K562 (cell line): ENCODE measurements at regions of chr3 and their contacts with region 1.

Region 1: GRCh38 chr3:43690400-43691119 is at the start of gene ABHD5:
- DNase-seq: peak; percentile 95 to 99 (median 96)
- ATAC-seq: peak; percentile 82
- H3K4me3 ChIP-seq: peak within 1 kb of the TSS; percentile 80
- H3K27ac ChIP-seq: peak within 1 kb of the TSS; percentile 91
- H3K4me1 ChIP-seq: peaks cover 48 to 63% of the 10 kb centered on the region in 2 experiments
- H3K27me3 ChIP-seq: no peaks in the 10 kb centered on the region
- CTCF ChIP-seq: peak; percentile 42 to 69 (median 60)
- EP300 ChIP-seq: peak; percentile 13
- POLR2A ChIP-seq: peak; percentile 98
- RAD21 ChIP-seq: peak; percentile 50 to 52
- polyA plus RNA-seq, gene ABHD5: 31.9 to 35.0 TPM

Region 2: DNA sequence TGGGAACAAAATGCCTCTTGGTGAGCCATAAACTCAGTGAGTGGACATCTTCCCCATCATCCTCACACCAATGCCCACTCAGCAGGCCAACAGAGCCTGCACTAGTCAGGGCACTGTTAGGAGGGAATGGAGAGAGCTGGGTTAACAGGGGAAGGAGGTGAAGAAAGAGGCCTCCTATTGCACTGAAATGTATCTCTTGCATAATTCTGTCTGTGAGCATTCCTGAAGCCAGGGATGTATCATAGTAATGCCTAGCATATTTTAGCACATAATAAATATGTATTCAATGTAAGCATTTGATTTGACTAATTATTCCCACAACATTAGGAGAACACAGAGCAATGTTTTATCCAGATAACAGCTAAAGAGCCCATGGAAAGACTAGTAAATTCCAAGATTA is 149.9 kb before region 1 on chr3:
- CTCF ChIA-PET with region 1: no interaction called
- POLR2A ChIA-PET with region 1: interaction called, 3 read pairs
- in situ Hi-C with region 1: no loop called
- intact Hi-C with region 1: loop called (anchors 1 kb)
- DNase-seq: no peak
- ATAC-seq: no peak
- H3K4me3 ChIP-seq: no peak overlapping the region
- H3K27ac ChIP-seq: no peak overlapping the region
- H3K4me1 ChIP-seq: peaks cover 7 to 13% of the 10 kb centered on the region in 2 experiments; a peak in 2 of 5 replicates
- H3K27me3 ChIP-seq: no peaks in the 10 kb centered on the region
- CTCF ChIP-seq: no peak
- EP300 ChIP-seq: no peak
- POLR2A ChIP-seq: no peak
- RAD21 ChIP-seq: no peak

Region 3: DNA sequence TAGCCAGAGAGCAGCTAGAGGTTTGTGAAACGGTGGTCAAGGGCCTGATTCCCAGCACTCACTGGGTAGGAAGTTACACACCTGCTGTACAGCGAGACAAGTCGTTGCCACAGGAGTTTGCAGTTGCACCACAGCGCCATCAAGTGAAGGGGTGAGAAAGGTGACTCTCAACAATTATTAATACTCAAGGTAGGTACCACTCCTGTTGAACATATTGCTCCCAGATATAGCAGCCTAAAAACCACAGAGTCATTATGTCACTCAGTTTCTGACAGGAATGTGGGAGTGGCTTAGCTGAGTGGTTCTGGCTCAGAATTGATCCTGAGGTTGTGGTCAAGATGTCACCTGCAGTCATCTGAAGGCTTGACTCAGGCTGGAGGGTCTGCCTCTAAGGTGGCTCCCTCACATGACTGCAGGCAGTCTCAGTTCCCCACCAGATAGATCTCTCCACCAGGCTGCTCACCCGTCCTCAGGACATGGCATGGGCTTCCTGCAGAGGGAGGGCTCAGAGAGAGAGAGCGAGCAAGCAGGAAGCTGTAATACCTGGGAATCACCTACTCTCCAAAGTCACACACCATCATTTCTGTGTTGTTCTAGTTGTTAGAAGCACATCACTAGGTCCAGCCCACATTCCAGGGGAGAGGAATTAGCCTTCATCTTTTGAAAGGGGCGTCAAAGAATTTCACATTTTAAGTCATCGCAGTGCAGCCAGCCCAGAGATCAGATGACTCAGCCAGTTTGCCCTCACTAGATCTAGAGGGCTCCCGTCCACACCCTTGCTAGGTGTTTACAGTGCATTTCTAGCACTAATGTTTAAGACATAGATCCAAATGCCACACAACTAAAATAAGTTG is 51.7 kb before region 1 on chr3:
- CTCF ChIA-PET with region 1: interaction called, 3 read pairs
- POLR2A ChIA-PET with region 1: interaction called, 7 read pairs
- in situ Hi-C with region 1: no loop called
- intact Hi-C with region 1: loop called (anchors 2 kb)
- DNase-seq: peak; percentile 66 to 92 (median 75)
- ATAC-seq: peak; percentile 90
- H3K4me3 ChIP-seq: 0 out of 2 replicates have a peak overlapping the region, but pooled peaks have one; percentile 1
- H3K27ac ChIP-seq: peak overlapping the region; percentile 67
- H3K4me1 ChIP-seq: peaks cover 10 to 24% of the 10 kb centered on the region in 2 experiments; a peak in 4 of 5 replicates
- H3K27me3 ChIP-seq: no peaks in the 10 kb centered on the region
- CTCF ChIP-seq: peak; percentile 88 to 97 (median 92)
- EP300 ChIP-seq: peak; percentile 45
- POLR2A ChIP-seq: no peak
- RAD21 ChIP-seq: peak; percentile 89 to 97

Region 4: DNA sequence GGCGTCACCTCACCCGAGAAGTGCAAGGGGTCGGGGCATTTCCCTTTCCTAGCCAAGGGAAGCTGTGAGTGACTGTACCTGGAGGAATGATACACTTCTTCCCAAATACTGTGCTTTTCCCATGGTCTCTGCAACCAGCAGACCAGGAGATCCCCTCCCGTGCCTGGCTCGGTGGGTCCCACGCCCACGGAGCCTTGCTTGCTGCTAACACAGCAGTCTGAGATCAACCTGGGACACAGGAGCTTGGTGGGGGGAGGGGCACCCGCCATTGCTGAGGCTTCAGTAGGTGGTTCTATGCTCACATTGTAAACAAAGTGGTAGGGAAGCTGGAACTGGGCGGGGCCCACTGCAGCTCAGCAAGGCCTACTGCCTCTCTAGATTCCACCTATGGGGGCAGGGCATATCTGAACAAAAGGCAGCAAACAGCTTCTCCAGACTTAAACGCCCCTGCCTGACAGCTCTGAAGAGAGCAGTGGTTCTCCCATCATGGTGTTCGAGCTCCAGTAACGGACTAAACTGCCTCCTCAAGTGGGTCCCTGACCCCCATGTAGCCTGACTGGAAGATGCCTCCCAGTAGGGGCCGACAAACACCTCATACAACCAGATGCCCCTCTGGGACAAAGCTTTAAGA is 31.2 kb before region 1 on chr3:
- CTCF ChIA-PET with region 1: no interaction called
- POLR2A ChIA-PET with region 1: interaction called, 6 read pairs
- in situ Hi-C with region 1: no loop called
- intact Hi-C with region 1: loop called (anchors 1 kb)
- DNase-seq: peak; percentile 31 to 90 (median 49)
- ATAC-seq: peak; percentile 100
- H3K4me3 ChIP-seq: 0 out of 2 replicates have a peak overlapping the region, but pooled peaks have one; percentile 13
- H3K27ac ChIP-seq: peak overlapping the region; percentile 83
- H3K4me1 ChIP-seq: peaks cover 8 to 11% of the 10 kb centered on the region in 2 experiments; a peak in 3 of 5 replicates
- H3K27me3 ChIP-seq: no peaks in the 10 kb centered on the region
- CTCF ChIP-seq: peak; percentile 41 to 53 (median 44); a peak in 3 of 6 replicates
- EP300 ChIP-seq: 0 out of 2 replicates have a peak, but pooled peaks have one; percentile 6
- POLR2A ChIP-seq: no peak; the same call in 1 of the 2 replicates
- RAD21 ChIP-seq: peak in 1 of 2 experiments; percentile 46; a peak in 2 of 4 replicates

Region 5: DNA sequence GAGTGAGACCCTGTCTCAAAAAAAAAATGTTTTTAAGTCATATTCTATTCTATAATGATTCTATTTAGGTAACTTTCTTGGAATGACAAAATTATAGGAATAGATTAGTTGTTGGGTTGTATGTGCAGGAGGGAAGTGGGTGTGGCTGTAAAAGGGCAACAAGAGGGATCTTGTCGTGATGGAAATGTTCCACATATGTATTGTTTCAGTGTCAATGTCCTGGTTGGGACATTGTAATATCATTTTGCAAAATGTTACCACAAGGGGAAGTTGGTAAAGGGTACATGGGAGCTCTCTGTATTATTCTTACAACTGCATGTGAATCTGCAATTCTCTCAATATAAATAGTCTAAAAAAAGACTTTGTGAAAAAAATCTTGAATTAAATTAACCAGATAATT is 14.1 kb before region 1 on chr3:
- CTCF ChIA-PET with region 1: interaction called, 3 read pairs
- POLR2A ChIA-PET with region 1: interaction called, 32 read pairs
- in situ Hi-C with region 1: no loop called
- intact Hi-C with region 1: loop called (anchors 1 kb)
- DNase-seq: no peak
- ATAC-seq: no peak
- H3K4me3 ChIP-seq: no peak overlapping the region
- H3K27ac ChIP-seq: no peak overlapping the region
- H3K4me1 ChIP-seq: peaks cover 13 to 64% of the 10 kb centered on the region in 2 experiments
- H3K27me3 ChIP-seq: no peaks in the 10 kb centered on the region
- CTCF ChIP-seq: no peak
- EP300 ChIP-seq: no peak
- POLR2A ChIP-seq: no peak
- RAD21 ChIP-seq: no peak

Region 6: DNA sequence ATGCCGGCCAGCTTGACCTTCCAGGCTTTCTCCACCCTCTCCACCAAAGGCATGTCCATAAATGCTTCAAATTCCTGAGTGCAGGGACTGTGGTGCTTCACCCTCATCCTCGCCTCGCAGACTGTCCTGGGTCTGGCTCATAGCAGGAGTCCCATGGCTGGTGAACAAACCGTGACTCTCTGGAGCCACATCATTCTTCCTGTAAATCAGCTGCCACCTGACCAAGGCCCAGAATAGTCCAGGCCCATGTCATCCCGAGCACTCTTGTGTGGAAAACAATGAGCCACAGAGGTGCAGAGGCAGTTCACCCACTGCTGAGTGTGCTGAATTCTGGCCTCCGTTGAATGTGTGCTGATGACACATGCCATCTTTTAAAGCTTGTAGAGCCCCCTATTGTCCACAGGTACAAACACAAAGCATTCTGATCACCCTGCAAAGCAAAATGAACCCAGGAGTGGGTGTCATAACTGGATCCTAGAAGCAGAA is 68.8 kb after region 1 on chr3:
- CTCF ChIA-PET with region 1: no interaction called
- POLR2A ChIA-PET with region 1: no interaction called
- in situ Hi-C with region 1: no loop called
- intact Hi-C with region 1: loop called (anchors 2 kb)
- DNase-seq: peak in 2 of 4 experiments; percentile 49 to 50
- ATAC-seq: peak; percentile 84
- H3K4me3 ChIP-seq: no peak overlapping the region
- H3K27ac ChIP-seq: no peak overlapping the region
- H3K4me1 ChIP-seq: peaks cover 0 to 8% of the 10 kb centered on the region in 2 experiments; a peak in 3 of 5 replicates
- H3K27me3 ChIP-seq: no peaks in the 10 kb centered on the region; a peak in 1 of 5 replicates
- CTCF ChIP-seq: peak; percentile 55 to 69 (median 62)
- EP300 ChIP-seq: no peak
- POLR2A ChIP-seq: no peak
- RAD21 ChIP-seq: peak; percentile 47 to 68

Region 7: DNA sequence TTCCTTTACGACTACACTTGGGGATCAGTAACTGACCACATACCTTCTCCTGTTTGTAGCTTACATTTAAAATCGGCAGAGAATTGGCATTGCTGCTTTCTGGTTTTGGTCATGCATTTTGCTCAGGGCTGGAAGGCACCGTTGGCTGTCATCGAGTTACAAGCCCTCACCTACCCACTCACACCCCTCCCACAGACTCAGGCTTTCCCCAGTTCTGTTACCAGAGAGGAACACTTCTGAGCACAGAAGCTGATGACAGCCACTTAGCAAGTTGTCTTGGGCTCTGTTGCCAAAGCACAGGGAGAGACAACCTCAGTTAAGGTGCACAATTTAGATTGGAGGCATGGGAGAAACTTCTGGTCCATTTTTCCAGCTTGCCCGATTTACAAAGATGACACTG is 346.3 kb after region 1 on chr3:
- CTCF ChIA-PET with region 1: no interaction called
- POLR2A ChIA-PET with region 1: no interaction called
- in situ Hi-C with region 1: no loop called
- intact Hi-C with region 1: no loop called
- DNase-seq: no peak
- ATAC-seq: no peak
- H3K4me3 ChIP-seq: no peak overlapping the region
- H3K27ac ChIP-seq: no peak overlapping the region
- H3K4me1 ChIP-seq: no peaks in the 10 kb centered on the region
- H3K27me3 ChIP-seq: peaks cover 0 to 33% of the 10 kb centered on the region in 2 experiments; a peak in 3 of 5 replicates
- CTCF ChIP-seq: no peak
- EP300 ChIP-seq: no peak
- POLR2A ChIP-seq: no peak
- RAD21 ChIP-seq: no peak

Region 8: DNA sequence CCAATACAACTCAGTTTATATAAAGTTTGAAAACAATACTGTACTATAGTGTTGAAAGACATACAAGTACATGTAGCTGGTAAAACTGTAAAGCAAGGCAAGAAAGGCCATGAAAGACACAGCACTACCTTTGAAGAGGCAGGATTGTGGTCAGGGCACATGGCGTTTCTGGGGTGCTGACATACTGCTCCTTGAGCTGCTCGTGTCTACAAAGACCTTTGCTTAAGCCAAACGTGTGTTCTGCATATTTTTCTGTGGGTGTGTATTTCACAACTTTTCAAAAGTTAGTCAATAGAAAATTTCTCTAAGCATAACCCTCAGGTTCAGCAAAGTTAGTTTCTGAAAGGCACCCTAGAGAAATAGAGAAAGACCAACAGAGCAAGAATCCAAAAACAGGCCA is 537.1 kb after region 1 on chr3:
- CTCF ChIA-PET with region 1: no interaction called
- POLR2A ChIA-PET with region 1: no interaction called
- in situ Hi-C with region 1: no loop called
- intact Hi-C with region 1: no loop called
- DNase-seq: no peak
- ATAC-seq: no peak
- H3K4me3 ChIP-seq: no peak overlapping the region
- H3K27ac ChIP-seq: no peak overlapping the region
- H3K4me1 ChIP-seq: peaks cover 0 to 25% of the 10 kb centered on the region in 2 experiments; a peak in 4 of 5 replicates
- H3K27me3 ChIP-seq: no peaks in the 10 kb centered on the region
- CTCF ChIP-seq: no peak
- EP300 ChIP-seq: no peak
- POLR2A ChIP-seq: no peak
- RAD21 ChIP-seq: no peak